ENCODE measurements at regions of chr17 and their contacts with region 1.

Region 1: DNA sequence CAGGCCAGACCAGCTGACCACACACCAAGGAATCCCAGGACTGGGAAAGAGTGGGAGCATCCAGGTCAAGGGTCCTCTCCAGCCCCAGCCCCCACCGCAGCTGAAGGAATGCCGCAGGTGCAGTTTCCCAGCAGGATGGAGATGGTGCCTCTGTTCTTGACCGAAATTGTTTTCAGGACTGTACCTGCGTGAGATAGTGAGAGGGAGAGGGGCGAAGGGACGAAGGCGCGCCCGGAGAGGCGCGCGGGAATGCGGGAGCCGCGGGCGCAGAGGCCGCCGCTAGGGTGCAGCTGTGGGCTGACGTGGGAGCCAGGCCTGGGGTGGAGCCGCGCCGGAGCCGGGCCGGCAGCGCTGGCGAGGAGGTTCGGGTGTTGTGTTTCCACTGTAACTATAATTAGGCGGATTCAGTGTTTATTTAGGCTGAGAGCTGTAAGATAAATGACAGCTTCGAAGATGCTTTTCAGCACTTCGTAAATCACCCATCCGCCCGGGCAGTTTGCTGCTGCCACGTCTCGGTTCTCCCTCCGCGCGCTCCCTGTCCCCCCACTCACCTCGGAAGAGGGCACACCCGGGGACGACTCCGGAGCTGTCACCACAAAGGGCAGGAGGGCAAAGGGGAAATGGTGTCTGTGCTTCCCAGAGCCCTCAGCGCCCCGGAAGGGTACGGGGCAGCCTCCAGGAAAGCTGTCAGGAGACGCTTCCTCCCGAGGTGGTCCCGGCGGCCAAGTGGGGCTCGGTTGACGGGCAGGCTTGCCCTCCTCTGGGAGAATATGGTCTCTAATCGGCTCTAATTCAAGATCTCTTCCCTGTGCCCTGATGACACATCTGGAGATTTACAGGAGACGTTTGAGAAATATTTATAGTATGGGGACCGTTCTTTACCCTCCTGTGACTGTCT is 38.2 kb downstream of the HOXB1 start:
- DNase-seq: peak; percentile 74
- ATAC-seq: peak; percentile 91
- H3K4me3 ChIP-seq: peak overlapping the region; percentile 39
- H3K27ac ChIP-seq: peak overlapping the region; percentile 38
- H3K4me1 ChIP-seq: peaks cover 22% of the 10 kb centered on the region
- H3K27me3 ChIP-seq: no peaks in the 10 kb centered on the region
- CTCF ChIP-seq: peak; percentile 86
- POLR2A ChIP-seq: no peak
- RAD21 ChIP-seq: peak; percentile 86

Region 2: GRCh38 chr17:48047741-48048383 is 444.8 kb before region 1 on chr17 and contains the start of gene NFE2L1:
- CTCF ChIA-PET with region 1: no interaction called
- POLR2A ChIA-PET with region 1: no interaction called
- dilution Hi-C with region 1: no loop called
- in situ Hi-C with region 1: no loop called
- intact Hi-C with region 1: loop called (anchors 5 kb)
- DNase-seq: peak; percentile 100
- ATAC-seq: peak; percentile 91
- H3K4me3 ChIP-seq: peak within 1 kb of the TSS; percentile 86
- H3K27ac ChIP-seq: peak within 1 kb of the TSS; percentile 98
- H3K4me1 ChIP-seq: peaks cover 24% of the 10 kb centered on the region
- H3K27me3 ChIP-seq: no peaks in the 10 kb centered on the region
- CTCF ChIP-seq: no peak
- POLR2A ChIP-seq: peak; percentile 90
- RAD21 ChIP-seq: no peak
- total RNA-seq, gene NFE2L1: 35.6 and 42.8 TPM in 2 replicates

Region 3: DNA sequence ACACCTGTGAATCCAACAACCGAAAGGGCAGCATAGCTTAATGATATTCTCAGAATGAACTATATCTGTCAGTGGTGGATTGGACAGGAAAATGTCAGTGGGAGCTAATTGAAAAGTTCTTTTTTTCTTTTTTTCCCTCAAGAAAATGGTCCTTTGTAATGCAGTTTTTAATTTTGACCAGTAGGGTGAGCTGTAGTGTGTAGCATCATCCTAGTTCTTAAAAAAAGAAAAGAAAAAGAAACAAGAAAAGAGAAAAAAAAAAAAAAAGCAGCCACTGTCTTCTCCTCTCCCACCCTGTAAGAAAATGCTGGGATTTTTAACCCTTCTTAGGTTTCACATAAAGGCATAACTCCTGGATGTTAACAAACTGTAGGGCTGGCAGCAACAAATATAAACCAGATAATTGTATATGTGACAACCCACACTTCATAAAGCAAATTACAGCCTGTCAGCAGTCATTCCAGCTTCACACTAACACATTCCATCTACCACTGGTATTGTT is 140.8 kb before region 1 on chr17:
- CTCF ChIA-PET with region 1: interaction called, 3 read pairs
- POLR2A ChIA-PET with region 1: no interaction called
- dilution Hi-C with region 1: no loop called
- in situ Hi-C with region 1: no loop called
- intact Hi-C with region 1: loop called (anchors 2 kb)
- DNase-seq: peak; percentile 67
- ATAC-seq: peak; percentile 63
- H3K4me3 ChIP-seq: no peak overlapping the region
- H3K27ac ChIP-seq: no peak overlapping the region
- H3K4me1 ChIP-seq: 0 out of 2 replicates have a peak, but pooled peaks cover 1% of the 10 kb centered on the region
- H3K27me3 ChIP-seq: peaks cover 32% of the 10 kb centered on the region
- CTCF ChIP-seq: peak; percentile 78
- POLR2A ChIP-seq: no peak
- RAD21 ChIP-seq: peak; percentile 77

Region 4: DNA sequence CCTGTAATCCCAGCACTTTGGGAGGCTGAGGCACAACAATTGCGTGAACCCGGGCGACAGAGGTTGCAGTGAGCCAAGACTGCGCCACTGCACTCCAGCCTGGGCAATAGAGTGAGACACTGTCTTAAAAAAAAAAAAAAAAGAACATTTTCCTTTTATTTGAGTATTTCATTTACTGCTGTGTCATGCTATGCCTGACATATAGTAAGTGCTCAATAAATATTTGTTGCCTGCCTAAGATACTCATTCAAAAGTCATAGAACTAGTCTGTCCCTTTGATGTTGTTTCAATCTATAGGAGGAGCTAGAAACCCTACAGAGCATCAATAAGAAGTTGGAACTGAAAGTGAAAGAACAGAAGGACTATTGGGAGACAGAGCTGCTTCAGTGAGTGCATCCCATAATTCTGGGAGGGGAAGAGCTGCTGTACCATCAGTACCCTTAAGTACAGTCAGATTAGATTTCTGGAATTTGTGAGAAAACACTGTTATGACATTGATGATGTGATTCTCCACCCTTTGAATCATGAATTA is 358.2 kb after region 1 on chr17:
- CTCF ChIA-PET with region 1: no interaction called
- POLR2A ChIA-PET with region 1: no interaction called
- dilution Hi-C with region 1: no loop called
- in situ Hi-C with region 1: no loop called
- intact Hi-C with region 1: no loop called
- DNase-seq: no peak
- ATAC-seq: no peak
- H3K4me3 ChIP-seq: no peak overlapping the region
- H3K27ac ChIP-seq: no peak overlapping the region
- H3K4me1 ChIP-seq: no peaks in the 10 kb centered on the region
- H3K27me3 ChIP-seq: no peaks in the 10 kb centered on the region
- CTCF ChIP-seq: no peak
- POLR2A ChIP-seq: no peak
- RAD21 ChIP-seq: no peak